Activated naive CD8-positive, alpha-beta T cell treated with anti-CD3 and anti-CD28 coated beads, Interleukin-2, amount 10 ng/mL, durations not matched to agents 7 days and 5 days (primary cell): ENCODE measurements at regions of chr11 and their contacts with region 1.

Region 1: DNA sequence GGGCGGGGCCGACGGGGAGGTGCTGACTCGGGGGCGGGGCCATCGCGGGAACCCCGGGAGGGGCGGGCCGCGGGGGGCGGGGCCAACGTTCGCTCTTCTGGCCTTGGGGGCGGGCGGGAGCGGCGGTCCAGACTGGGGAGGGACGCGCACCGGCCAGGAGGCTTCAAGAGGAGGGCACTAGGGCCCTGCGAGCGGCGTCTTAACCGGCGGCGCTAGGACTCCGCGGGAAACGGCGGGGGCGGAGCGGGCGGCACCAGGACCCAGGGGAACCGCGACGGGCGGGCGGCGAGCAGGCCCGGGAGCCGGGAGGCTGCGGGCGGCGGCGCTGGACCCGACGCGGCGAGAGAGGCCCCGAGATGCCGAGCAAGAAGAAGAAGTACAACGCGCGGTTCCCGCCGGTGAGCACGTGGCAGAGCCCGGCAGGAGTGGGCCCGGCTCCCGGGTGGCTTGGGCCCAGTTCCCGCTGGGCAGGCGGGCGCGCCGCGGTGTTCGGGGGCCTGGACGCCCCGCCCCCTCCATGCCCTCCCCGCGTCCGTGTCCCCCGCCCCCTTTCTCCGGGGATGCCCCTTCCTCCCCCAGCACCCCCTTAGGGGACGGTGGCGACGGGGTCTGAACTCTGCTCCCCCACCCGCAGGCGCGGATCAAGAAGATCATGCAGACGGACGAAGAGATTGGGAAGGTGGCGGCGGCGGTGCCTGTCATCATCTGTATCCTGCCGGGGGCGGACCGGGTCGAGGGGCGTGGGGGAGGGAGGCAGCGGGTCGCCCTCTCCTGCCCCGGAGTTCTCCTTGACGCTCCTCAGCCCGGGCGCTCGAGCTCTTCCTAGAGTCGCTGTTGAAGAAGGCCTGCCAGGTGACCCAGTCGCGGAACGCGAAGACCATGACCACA is at the start of gene DRAP1:
- DNase-seq: peak; percentile 98
- ATAC-seq: peak; percentile 92
- H3K4me3 Mint-ChIP-seq: peak within 1 kb of the TSS; percentile 98
- H3K27ac Mint-ChIP-seq: peak within 1 kb of the TSS; percentile 91
- H3K4me1 Mint-ChIP-seq: peaks cover 27% of the 10 kb centered on the region
- H3K27me3 Mint-ChIP-seq: no peaks in the 10 kb centered on the region
- total RNA-seq, gene DRAP1: 225 to 259 TPM

Region 2: GRCh38 chr11:65900125-65900898 is 19.1 kb before region 1 on chr11 and contains the start of gene FOSL1:
- POLR2A ChIA-PET with region 1: interaction called, 170 read pairs
- DNase-seq: peak; percentile 90
- ATAC-seq: peak; percentile 92
- H3K4me3 Mint-ChIP-seq: peak within 1 kb of the TSS; percentile 72
- H3K27ac Mint-ChIP-seq: peak within 1 kb of the TSS; percentile 51
- H3K4me1 Mint-ChIP-seq: peaks cover 24% of the 10 kb centered on the region
- H3K27me3 Mint-ChIP-seq: peaks cover 8% of the 10 kb centered on the region
- total RNA-seq, gene FOSL1: 1.9 to 2.0 TPM

Region 3: GRCh38 chr11:65961232-65961901 is 42.0 kb after region 1 on chr11 and contains the start of gene SART1:
- POLR2A ChIA-PET with region 1: interaction called, 11 read pairs
- DNase-seq: peak; percentile 91
- ATAC-seq: peak; percentile 91
- H3K4me3 Mint-ChIP-seq: peak within 1 kb of the TSS; percentile 94
- H3K27ac Mint-ChIP-seq: peak within 1 kb of the TSS; percentile 97
- H3K4me1 Mint-ChIP-seq: peaks cover 38% of the 10 kb centered on the region
- H3K27me3 Mint-ChIP-seq: no peaks in the 10 kb centered on the region
- total RNA-seq, gene SART1: 79.3 to 83.5 TPM